ENCODE measurements at regions of chr6 and their contacts with region 1.

Region 1: DNA sequence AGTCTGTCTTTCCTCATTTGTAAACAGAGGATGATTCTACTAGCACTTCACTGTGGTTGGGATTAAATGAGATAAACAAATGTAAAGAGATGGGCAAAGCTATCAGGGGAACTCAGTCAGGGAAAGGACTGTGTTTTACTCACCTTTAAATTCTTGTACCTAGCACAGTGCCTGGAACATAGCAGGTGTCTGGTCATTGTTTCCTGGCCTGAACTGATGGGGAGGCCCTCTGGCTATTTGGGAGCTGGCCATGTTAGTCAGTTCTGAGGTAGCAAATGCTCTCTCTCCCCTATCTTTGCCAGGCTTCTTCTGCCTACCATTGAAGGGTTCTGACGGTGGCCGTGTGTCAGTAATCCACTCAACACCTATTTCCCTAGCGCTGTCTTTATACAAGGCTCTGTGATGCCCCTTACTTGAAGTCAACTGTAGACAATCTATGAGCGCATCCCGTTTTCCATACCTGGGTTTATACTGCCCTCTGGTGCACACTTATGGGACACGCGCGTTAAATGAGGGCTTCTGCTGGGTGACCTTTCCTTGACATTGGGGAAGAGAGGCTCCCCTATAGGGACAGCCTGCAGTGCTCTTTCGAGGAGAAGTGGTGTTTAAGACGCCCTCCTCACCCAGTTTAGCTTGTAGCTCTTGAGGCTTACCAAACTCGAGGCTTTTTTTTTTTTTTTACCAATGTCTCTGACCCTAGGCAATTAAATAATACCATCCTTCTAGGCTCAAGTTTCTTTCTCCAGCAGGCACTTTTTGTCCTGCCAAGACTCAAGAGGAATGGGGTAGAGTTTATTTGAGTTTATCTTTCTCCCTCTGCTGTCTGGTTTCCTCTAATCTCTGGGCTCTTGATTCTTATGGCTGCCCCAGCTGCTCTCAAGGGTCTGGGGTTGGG is 4.0 kb upstream of the SPATS1 start:
- DNase-seq: peak in 1 of 2 donors; percentile 66
- ATAC-seq: peak; percentile 92

Region 2: GRCh38 chr6:44161997-44162338 is 176.5 kb before region 1 on chr6:
- intact Hi-C with region 1: loop called in 1 of 2 experiments (anchors 10 kb)
- DNase-seq: no peak
- ATAC-seq: no peak

Region 3: DNA sequence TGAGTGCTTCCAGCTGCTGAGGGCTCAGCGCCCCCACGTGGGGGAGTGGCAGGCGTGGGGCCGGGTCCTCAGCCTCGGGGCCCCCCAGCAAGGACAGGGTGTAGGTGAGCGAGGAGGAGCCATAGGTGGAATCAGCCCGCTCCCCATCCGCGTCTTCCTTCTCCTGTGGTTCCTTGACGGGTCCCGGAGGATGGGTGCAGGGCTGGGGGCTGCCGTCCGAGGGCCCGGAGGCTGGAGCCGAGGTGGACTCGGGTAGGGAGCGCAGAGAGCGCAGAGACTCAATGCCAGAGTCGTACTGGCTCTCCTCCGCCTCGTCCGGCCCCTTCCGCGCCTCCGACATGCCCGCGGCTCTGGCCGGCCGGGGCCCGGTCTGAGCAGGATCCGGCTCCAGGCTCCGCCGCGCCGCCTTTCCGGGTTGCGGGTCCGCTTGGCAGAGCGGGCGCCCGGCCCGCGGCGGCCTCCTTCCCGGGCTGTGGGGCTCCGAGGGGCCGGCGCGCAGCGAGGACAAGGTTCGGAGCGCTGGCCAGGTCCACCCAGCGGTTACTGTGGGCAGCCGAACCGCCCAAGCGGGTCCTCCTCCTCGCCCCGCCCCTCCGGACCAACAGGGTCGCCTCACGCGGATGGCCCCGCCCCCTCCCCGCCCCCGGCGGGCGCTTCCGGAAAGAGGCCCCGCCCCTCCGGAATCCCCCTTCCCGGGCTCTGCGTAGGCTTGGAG is 73.3 kb before region 1 on chr6 and contains the start of gene NFKBIE:
- intact Hi-C with region 1: loop called in 1 of 2 experiments (anchors 5 kb)
- DNase-seq: peak; percentile 95 to 98
- ATAC-seq: peak; percentile 80
- total RNA-seq, gene NFKBIE: 9.6 to 15.3 TPM

Region 4: DNA sequence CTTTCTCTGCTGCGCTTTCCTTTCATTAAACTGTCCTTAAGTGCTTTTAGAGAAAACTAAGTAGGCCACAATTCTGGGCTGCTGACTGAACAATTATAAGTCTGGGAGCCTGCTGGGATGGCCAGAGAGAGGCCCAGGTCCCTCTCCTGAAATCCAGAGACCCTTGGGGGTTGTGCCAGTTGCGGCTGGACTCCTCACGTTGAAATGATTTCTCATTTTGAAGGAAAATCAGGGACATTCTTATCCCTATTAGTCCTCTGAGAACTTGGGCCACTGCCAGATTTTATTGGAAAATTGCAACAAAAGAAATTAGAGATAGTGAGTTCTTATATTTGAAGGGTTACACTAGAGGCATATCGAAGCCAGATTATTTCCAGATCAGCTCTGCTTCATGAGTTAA is 1532.1 kb after region 1 on chr6:
- intact Hi-C with region 1: no loop called
- DNase-seq: no peak
- ATAC-seq: no peak